CD4-positive, alpha-beta memory T cell (primary cell): ENCODE measurements at regions of chr11 and their contacts with region 1.

Region 1: GRCh38 chr11:77127232-77127911 is 674 bp upstream of the MYO7A start:
- DNase-seq: peak in 4 of 5 donors; percentile 46 to 66 (median 54)
- H3K4me3 ChIP-seq: peak overlapping the region; percentile 20 to 62
- H3K4me3 Mint-ChIP-seq: peak overlapping the region; percentile 48 to 80 (median 73)
- H3K27ac ChIP-seq: no peak overlapping the region
- H3K27ac Mint-ChIP-seq: peak overlapping the region in 3 of 7 donors; percentile 52 to 83 (median 56)
- H3K4me1 ChIP-seq: peaks cover 14% of the 10 kb centered on the region
- H3K4me1 Mint-ChIP-seq: peaks cover 3 to 17% (median 8%) of the 10 kb centered on the region in 4 donors
- H3K27me3 ChIP-seq: no peaks in the 10 kb centered on the region
- H3K27me3 Mint-ChIP-seq: no peaks in the 10 kb centered on the region

Region 2: DNA sequence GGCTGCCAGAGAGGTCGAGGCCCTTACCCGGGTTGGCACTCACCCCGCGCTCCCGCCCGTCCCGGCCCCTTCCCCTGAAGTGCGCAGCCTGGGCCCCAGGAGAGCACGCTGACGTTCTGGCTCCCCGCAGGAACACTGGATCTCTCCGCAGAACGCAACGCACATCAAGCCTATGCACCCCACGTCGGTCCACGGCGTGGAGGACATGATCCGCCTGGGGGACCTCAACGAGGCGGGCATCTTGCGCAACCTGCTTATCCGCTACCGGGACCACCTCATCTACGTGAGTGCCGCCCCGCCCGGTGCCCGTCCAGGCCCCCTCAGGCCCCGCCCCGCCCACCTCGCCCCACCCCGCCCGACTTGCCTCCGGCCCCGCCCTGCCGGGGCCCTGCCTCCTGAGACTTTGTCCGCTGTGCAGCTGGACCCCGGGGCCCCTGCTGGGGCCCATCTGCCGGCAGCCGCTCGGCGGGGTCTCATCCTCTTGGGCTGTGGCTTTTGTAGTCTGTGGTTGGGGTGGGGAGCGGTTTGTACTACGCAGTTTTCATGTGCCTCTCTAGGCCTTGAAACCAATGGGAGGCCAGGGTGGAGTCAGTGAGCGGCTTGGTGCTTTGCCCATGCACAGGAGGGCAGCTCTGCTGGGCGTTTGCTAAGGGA is 20.4 kb after region 1 on chr11:
- CTCF ChIA-PET with region 1: interaction called, 16 read pairs
- POLR2A ChIA-PET with region 1: no interaction called
- intact Hi-C with region 1: no loop called
- DNase-seq: peak; percentile 21 to 53 (median 34)
- H3K4me3 ChIP-seq: no peak overlapping the region
- H3K4me3 Mint-ChIP-seq: peak overlapping the region; percentile 62 to 83 (median 75)
- H3K27ac ChIP-seq: no peak overlapping the region
- H3K27ac Mint-ChIP-seq: peak overlapping the region; percentile 36 to 89 (median 66)
- H3K4me1 ChIP-seq: peaks cover 33% of the 10 kb centered on the region
- H3K4me1 Mint-ChIP-seq: peaks cover 20 to 35% (median 31%) of the 10 kb centered on the region in 4 donors
- H3K27me3 ChIP-seq: no peaks in the 10 kb centered on the region
- H3K27me3 Mint-ChIP-seq: no peaks in the 10 kb centered on the region

Region 3: DNA sequence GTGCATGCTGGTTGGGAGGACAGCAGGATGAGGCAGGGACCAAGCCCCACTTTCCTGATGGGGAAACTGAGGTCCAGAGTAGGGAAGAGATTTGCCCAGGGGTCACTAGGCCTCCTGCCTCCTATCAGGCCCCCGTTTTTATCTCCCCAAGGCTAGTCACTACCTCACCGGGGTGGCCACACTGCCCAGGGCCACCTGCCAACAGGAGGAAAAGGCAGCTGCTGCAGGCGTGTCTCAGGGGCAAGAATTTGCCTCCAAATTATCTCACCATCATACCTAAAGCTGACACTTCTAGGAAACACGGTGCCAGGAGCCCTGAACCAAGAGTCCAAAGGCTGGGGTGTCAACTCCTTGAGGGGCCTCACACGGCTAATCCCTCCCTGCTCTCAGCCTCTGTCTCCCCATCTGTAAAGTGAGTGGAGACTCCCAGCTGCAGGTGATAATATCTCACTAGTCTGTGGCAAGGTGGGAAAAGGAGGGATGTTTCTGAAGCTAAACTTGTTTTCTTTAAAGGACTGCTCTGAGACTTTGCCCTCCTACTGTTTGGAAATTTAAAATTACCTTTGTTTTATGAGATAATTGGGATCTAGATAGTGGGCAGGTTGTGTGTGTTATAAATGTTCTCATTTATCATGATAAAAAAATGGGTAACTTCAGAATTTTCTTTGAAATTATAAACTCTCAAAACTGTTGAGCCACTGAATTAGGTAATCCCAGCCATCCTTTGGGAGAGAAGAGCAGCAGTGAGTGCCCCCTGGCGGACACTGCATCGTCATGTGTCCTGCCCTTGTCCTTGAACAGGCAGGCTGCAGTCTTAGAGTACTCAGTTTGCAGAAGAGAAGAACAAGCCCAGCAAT is 60.6 kb after region 1 on chr11:
- CTCF ChIA-PET with region 1: interaction called, 89 read pairs
- POLR2A ChIA-PET with region 1: interaction called, 5 read pairs
- intact Hi-C with region 1: no loop called
- DNase-seq: peak in 4 of 5 donors; percentile 45 to 57 (median 54)
- H3K4me3 ChIP-seq: no peak overlapping the region
- H3K4me3 Mint-ChIP-seq: no peak overlapping the region
- H3K27ac ChIP-seq: no peak overlapping the region
- H3K27ac Mint-ChIP-seq: peak overlapping the region in 2 of 7 donors; percentile 0 to 21
- H3K4me1 ChIP-seq: peaks cover 6% of the 10 kb centered on the region
- H3K4me1 Mint-ChIP-seq: peaks cover 0 to 10% (median 4%) of the 10 kb centered on the region in 4 donors
- H3K27me3 ChIP-seq: no peaks in the 10 kb centered on the region
- H3K27me3 Mint-ChIP-seq: no peaks in the 10 kb centered on the region

Region 4: DNA sequence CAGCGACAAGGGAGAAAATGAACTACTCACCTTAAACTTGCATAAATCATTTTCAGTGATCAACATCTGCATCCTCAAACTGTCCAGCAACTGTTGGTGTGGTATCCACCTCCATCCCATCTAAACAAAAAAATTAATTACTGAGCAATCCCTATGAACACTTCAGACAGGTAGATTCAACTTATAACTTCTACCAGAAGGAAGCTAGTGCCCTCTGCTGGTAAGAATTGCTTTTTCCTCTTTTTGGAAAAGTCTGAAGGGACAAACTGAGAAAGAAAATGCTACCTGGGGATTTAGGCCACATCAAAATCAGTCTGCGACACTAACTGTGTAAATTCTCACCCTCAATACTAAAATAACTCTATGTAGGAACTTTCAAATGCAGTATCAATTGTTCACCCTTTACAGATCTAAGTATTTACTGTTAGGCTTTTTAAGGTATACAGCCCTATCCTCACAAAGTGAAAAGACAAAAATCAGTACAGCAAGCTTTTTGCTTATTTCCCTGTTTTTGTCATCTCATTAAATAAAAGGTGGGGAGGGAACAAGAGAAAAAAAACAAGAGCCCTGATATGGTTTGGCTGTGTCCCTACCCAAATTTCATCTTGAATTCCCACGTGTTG is 492.3 kb after region 1 on chr11:
- CTCF ChIA-PET with region 1: interaction called, 14 read pairs
- POLR2A ChIA-PET with region 1: no interaction called
- intact Hi-C with region 1: loop called (anchors 1 kb)
- DNase-seq: peak in 4 of 5 donors; percentile 19 to 50 (median 44)
- H3K4me3 ChIP-seq: no peak overlapping the region
- H3K4me3 Mint-ChIP-seq: no peak overlapping the region
- H3K27ac ChIP-seq: no peak overlapping the region
- H3K27ac Mint-ChIP-seq: peak overlapping the region in 2 of 7 donors; percentile 0 to 59
- H3K4me1 ChIP-seq: no peaks in the 10 kb centered on the region
- H3K4me1 Mint-ChIP-seq: peaks cover 0 to 2% (median 0%) of the 10 kb centered on the region in 4 donors
- H3K27me3 ChIP-seq: no peaks in the 10 kb centered on the region
- H3K27me3 Mint-ChIP-seq: no peaks in the 10 kb centered on the region